Sciatic nerve (tissue), 2 donors: ENCODE measurements at regions of chr6 and their contacts with region 1.

Region 1: DNA sequence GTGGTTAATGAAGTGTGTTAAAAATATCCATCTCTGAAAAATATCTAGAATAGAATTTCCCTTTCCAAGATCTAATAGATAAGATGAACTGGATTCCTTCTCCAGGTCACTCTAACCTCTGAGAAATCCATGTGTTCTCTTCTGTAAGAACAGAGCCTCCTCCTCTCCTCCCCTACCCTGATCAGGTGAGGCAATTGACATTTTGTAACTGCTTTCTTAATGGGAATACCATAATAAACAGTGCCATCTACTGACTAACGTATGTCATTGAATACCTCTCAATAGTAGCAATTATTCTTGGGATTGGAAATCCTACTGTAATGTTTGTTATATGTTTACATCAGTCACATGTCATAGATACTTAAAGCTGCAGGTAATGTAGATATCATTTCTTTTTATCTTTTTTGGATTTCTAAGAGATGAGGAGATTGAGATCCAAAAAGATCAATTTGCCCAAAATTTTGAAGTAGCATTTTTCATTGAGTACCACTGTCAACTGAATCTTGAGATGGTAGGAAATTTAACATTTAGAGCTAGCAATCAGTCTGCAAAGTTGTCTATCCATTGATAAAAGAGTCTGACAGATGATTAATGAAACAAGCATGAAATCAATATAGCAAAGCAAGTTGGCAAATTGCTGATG is 365.8 kb upstream of the HSF2 start:
- DNase-seq: no peak
- ATAC-seq: peak; percentile 87

Region 2: GRCh38 chr6:121430514-121431460 is 602.9 kb before region 1 on chr6:
- intact Hi-C with region 1: loop called (anchors 10 kb)
- DNase-seq: no peak
- ATAC-seq: peak; percentile 51

Region 3: GRCh38 chr6:121726596-121726995 is 307.1 kb before region 1 on chr6:
- intact Hi-C with region 1: no loop called
- DNase-seq: no peak
- ATAC-seq: no peak

Region 4: DNA sequence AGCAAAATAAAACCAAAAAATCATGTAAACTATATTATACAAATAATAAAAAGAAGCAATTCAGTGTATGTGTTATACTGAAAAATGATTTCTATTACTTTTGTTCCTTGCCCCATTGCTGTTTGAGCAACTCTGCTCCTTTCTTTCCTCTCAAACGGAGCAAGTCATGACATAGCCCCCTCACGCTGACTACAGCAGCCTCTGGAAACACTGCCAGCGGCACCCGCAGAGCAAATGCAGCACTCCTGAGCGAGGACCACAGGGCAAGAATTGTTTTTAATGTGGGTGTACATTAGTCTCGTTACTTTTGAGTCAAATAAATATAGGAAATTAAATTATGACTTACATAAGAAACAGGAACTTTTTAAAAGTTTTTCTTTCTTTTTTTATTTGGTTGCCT is 15.7 kb after region 1 on chr6:
- intact Hi-C with region 1: no loop called
- DNase-seq: no peak
- ATAC-seq: peak; percentile 82